CD4-positive, alpha-beta T cell (primary cell): ENCODE measurements at regions of chr7 and their contacts with region 1.

Region 1: DNA sequence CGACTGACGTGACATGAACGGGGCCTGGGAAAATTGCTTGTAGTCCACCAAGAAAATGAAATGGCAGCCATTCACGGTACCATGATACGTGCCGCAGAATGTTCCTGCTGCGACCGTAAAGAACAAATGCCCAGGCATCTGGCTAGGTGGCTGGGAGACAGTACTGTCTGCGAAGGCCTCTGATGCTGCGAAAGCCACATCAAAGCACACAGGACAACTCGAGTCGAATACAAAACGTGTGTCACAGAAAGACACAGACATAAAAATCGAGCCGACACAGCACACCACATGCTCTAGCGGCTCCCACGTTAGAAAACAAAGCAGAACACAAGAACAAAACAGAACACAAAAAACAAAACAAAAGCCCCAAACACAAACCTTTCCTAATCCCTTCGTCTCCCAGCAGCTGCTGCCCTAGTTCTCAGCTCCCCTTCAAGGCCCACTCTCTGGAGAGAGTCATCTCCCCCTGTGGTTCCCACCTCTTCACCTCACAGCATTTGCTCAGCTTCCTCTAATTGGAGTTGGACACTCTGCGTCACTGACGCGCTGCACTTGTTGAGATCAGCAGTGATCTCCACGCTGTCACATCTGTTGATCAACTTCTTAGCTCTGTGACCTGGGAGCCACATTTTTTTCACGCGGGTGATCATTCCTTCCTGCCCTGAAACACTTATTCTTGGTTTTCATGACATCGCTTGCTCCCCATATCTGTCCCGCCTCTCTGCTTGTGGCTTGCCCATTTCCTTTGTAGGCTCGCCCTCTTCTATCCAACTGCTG is 112.2 kb downstream of the CLEC2L start:
- DNase-seq: peak; percentile 44 to 93 (median 64)
- ATAC-seq: peak; percentile 87
- H3K4me3 ChIP-seq: peak overlapping the region; percentile 27
- H3K4me3 Mint-ChIP-seq: peak overlapping the region; percentile 72
- H3K27ac ChIP-seq: peak overlapping the region; percentile 58 to 71
- H3K27ac Mint-ChIP-seq: peak overlapping the region; percentile 92
- H3K4me1 ChIP-seq: peaks cover 47% of the 10 kb centered on the region
- H3K4me1 Mint-ChIP-seq: peaks cover 73% of the 10 kb centered on the region
- H3K27me3 ChIP-seq: no peaks in the 10 kb centered on the region
- H3K27me3 Mint-ChIP-seq: no peaks in the 10 kb centered on the region
- CTCF ChIP-seq: no peak

Region 2: DNA sequence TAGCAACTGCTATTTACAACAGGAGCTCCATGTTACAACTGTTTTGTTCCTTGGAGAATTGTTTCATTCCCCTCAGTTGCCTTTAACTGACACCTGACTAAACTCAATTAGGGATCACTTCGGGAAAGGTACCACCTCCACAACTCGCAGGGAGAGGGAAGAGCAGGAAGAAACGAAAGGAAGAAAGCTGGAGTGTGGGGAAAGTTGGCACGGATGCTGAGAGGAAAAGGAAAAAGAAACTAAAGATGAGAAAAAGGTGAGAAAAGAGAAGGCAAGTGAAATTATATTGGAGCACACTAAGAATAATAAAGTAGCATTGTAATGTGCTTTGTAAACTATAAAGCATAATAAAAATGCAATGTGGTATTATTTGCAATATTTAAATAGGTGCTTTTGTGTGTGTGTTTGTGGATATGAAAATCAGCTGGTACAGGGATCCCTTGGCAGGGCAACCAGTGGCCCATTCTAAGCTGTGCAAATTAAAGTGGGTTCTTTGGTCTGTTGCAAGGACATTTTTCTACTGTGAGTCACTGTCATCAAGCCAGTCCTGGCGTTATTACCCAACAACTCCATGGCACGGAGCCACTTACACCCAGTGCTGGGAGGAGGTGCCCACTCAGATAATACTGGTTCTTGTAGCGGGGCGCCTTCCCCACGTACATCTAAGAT is 96.2 kb after region 1 on chr7:
- CTCF ChIA-PET with region 1: no interaction called
- POLR2A ChIA-PET with region 1: no interaction called
- intact Hi-C with region 1: loop called in 1 of 2 experiments (anchors 5 kb)
- DNase-seq: peak in 2 of 14 experiments; percentile 56 to 62
- ATAC-seq: no peak
- H3K4me3 ChIP-seq: no peak overlapping the region
- H3K4me3 Mint-ChIP-seq: peak overlapping the region; percentile 54
- H3K27ac ChIP-seq: no peak overlapping the region
- H3K27ac Mint-ChIP-seq: peak overlapping the region; percentile 79
- H3K4me1 ChIP-seq: peaks cover 47% of the 10 kb centered on the region
- H3K4me1 Mint-ChIP-seq: peaks cover 76% of the 10 kb centered on the region
- H3K27me3 ChIP-seq: no peaks in the 10 kb centered on the region
- H3K27me3 Mint-ChIP-seq: no peaks in the 10 kb centered on the region
- CTCF ChIP-seq: no peak

Region 3: GRCh38 chr7:139930286-139930965 is 294.7 kb after region 1 on chr7:
- CTCF ChIA-PET with region 1: no interaction called
- POLR2A ChIA-PET with region 1: no interaction called
- intact Hi-C with region 1: no loop called
- DNase-seq: no peak
- ATAC-seq: no peak
- H3K4me3 ChIP-seq: no peak overlapping the region
- H3K4me3 Mint-ChIP-seq: no peak overlapping the region
- H3K27ac ChIP-seq: no peak overlapping the region
- H3K27ac Mint-ChIP-seq: no peak overlapping the region
- H3K4me1 ChIP-seq: no peaks in the 10 kb centered on the region
- H3K4me1 Mint-ChIP-seq: no peaks in the 10 kb centered on the region
- H3K27me3 ChIP-seq: no peaks in the 10 kb centered on the region
- H3K27me3 Mint-ChIP-seq: no peaks in the 10 kb centered on the region
- CTCF ChIP-seq: no peak

Region 4: GRCh38 chr7:140541513-140542227 is 906.0 kb after region 1 on chr7:
- CTCF ChIA-PET with region 1: no interaction called
- POLR2A ChIA-PET with region 1: no interaction called
- intact Hi-C with region 1: no loop called
- DNase-seq: no peak
- ATAC-seq: no peak
- H3K4me3 ChIP-seq: no peak overlapping the region
- H3K4me3 Mint-ChIP-seq: no peak overlapping the region
- H3K27ac ChIP-seq: no peak overlapping the region
- H3K27ac Mint-ChIP-seq: no peak overlapping the region
- H3K4me1 ChIP-seq: no peaks in the 10 kb centered on the region
- H3K4me1 Mint-ChIP-seq: no peaks in the 10 kb centered on the region
- H3K27me3 ChIP-seq: no peaks in the 10 kb centered on the region
- H3K27me3 Mint-ChIP-seq: peaks cover 21% of the 10 kb centered on the region
- CTCF ChIP-seq: no peak